H1 (cell line): ENCODE measurements at regions of chr12 and their contacts with region 1.

Region 1: DNA sequence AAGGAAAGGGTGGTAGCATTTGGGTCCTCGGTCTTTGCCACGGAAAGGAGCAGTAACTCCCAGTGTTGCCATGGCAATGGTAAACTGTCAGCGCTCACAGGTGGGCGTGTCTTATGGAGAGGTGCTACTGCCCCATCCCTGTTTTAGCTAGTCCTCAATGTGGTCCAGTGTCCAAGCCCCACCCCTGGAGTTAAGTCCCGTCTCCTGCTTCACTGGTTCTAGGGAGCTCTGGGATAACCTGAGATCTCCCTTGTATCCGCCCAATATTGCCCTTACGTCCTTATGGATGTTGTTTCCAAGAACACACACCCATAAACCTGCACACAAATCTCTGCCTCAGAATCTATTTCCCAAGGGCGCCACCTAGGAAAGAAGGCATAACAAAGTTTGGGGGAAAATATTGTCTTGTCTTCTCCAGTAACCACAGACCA is 64.2 kb downstream of the SPRING1 start:
- DNase-seq: no peak
- H3K4me3 ChIP-seq: no peak overlapping the region
- H3K27ac ChIP-seq: no peak overlapping the region
- H3K4me1 ChIP-seq: no peaks in the 10 kb centered on the region
- H3K27me3 ChIP-seq: no peaks in the 10 kb centered on the region
- CTCF ChIP-seq: peak in 1 of 3 experiments; percentile 13; a peak in 1 of 4 replicates
- EP300 ChIP-seq: no peak
- POLR2A ChIP-seq: no peak
- RAD21 ChIP-seq: peak; percentile 11 to 12; a peak in 3 of 4 replicates

Region 2: GRCh38 chr12:116547955-116548501 is 125.7 kb before region 1 on chr12:
- CTCF ChIA-PET with region 1: no interaction called
- POLR2A ChIA-PET with region 1: no interaction called
- DNase-seq: no peak
- H3K4me3 ChIP-seq: no peak overlapping the region
- H3K27ac ChIP-seq: no peak overlapping the region
- H3K4me1 ChIP-seq: peaks cover 0 to 5% (median 0%) of the 10 kb centered on the region in 4 experiments; a peak in 1 of 7 replicates
- H3K27me3 ChIP-seq: no peaks in the 10 kb centered on the region
- CTCF ChIP-seq: no peak
- EP300 ChIP-seq: no peak
- POLR2A ChIP-seq: no peak
- RAD21 ChIP-seq: no peak

Region 3: GRCh38 chr12:116687888-116688287 is 14.2 kb after region 1 on chr12:
- CTCF ChIA-PET with region 1: interaction called, 10 read pairs
- POLR2A ChIA-PET with region 1: no interaction called
- DNase-seq: peak; percentile 76 to 92
- H3K4me3 ChIP-seq: no peak overlapping the region
- H3K27ac ChIP-seq: no peak overlapping the region
- H3K4me1 ChIP-seq: peaks cover 0 to 2% (median 0%) of the 10 kb centered on the region in 4 experiments; a peak in 2 of 7 replicates
- H3K27me3 ChIP-seq: 0 out of 7 replicates have a peak, but pooled peaks cover 0 to 3% (median 0%) of the 10 kb centered on the region in 4 experiments
- CTCF ChIP-seq: peak; percentile 94 to 100 (median 99)
- EP300 ChIP-seq: peak in 1 of 2 experiments; percentile 41; a peak in 1 of 3 replicates
- POLR2A ChIP-seq: no peak
- RAD21 ChIP-seq: peak; percentile 82 to 90